ENCODE measurements at regions of chr4 and their contacts with region 1.

Region 1: GRCh38 chr4:77385124-77385969 is 220.3 kb upstream of the CXCL13 start:
- DNase-seq: peak; percentile 18 to 73
- ATAC-seq: peak in 2 of 3 donors; percentile 58 to 70
- H3K4me3 ChIP-seq: no peak overlapping the region
- H3K4me3 Mint-ChIP-seq: no peak overlapping the region
- H3K27ac ChIP-seq: no peak overlapping the region
- H3K27ac Mint-ChIP-seq: no peak overlapping the region
- H3K4me1 ChIP-seq: no peaks in the 10 kb centered on the region
- H3K4me1 Mint-ChIP-seq: no peaks in the 10 kb centered on the region
- H3K27me3 ChIP-seq: no peaks in the 10 kb centered on the region
- H3K27me3 Mint-ChIP-seq: no peaks in the 10 kb centered on the region
- CTCF ChIP-seq: peak; percentile 64

Region 2: GRCh38 chr4:76641351-76641750 is 744.0 kb before region 1 on chr4:
- intact Hi-C with region 1: no loop called
- DNase-seq: no peak
- ATAC-seq: no peak
- H3K4me3 ChIP-seq: no peak overlapping the region
- H3K4me3 Mint-ChIP-seq: no peak overlapping the region
- H3K27ac ChIP-seq: no peak overlapping the region
- H3K27ac Mint-ChIP-seq: no peak overlapping the region
- H3K4me1 ChIP-seq: no peaks in the 10 kb centered on the region
- H3K4me1 Mint-ChIP-seq: no peaks in the 10 kb centered on the region
- H3K27me3 ChIP-seq: no peaks in the 10 kb centered on the region
- H3K27me3 Mint-ChIP-seq: peaks cover 10 to 19% of the 10 kb centered on the region in 2 donors
- CTCF ChIP-seq: no peak

Region 3: GRCh38 chr4:77600521-77601451 is 215.4 kb after region 1 on chr4:
- intact Hi-C with region 1: loop called (anchors 1 kb)
- DNase-seq: peak in 1 of 2 donors; percentile 56
- ATAC-seq: peak in 2 of 3 donors; percentile 53 to 73
- H3K4me3 ChIP-seq: no peak overlapping the region
- H3K4me3 Mint-ChIP-seq: no peak overlapping the region
- H3K27ac ChIP-seq: no peak overlapping the region
- H3K27ac Mint-ChIP-seq: no peak overlapping the region
- H3K4me1 ChIP-seq: no peaks in the 10 kb centered on the region
- H3K4me1 Mint-ChIP-seq: peaks cover 2% of the 10 kb centered on the region in 2 donors
- H3K27me3 ChIP-seq: no peaks in the 10 kb centered on the region
- H3K27me3 Mint-ChIP-seq: peaks cover 9 to 18% of the 10 kb centered on the region in 2 donors
- CTCF ChIP-seq: peak; percentile 75

Region 4: DNA sequence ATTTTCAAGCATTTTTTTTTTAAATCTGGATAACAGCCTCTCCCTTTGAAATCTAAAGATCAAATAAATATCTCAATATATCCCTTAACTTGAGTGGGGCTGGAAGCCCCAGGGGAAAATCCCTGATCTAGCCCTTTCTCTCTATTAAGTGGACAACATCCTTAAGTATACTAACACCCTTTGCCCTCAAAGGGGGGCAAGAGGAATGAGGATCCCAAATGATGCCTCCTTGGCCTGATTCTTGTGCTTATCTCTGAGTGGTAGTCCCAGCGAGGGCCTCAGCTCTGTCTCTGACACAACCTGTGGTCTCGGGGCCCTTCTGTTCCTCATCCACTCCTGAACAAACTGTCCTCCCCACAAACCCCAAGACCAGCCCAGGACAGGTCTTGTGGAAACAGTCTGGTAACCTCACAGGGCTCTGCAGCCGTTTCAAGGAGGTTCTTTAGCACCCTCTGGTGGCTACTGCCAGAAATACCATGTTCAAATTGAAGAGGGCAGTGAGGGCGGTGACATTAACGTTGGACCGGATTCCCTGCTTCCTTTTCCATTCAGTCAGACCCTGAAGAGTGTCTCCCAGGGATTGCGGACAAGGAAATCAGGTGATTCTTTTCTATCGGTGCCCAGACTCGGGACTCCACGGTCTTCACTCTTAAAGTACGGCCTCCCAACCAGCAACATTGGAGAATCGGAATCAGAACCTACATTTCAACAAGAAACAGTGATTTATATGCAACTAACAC is 233.2 kb after region 1 on chr4:
- intact Hi-C with region 1: loop called (anchors 5 kb)
- DNase-seq: peak; percentile 27 to 76
- ATAC-seq: peak; percentile 88 to 97 (median 88)
- H3K4me3 ChIP-seq: no peak overlapping the region
- H3K4me3 Mint-ChIP-seq: no peak overlapping the region
- H3K27ac ChIP-seq: no peak overlapping the region
- H3K27ac Mint-ChIP-seq: no peak overlapping the region
- H3K4me1 ChIP-seq: peaks cover 6% of the 10 kb centered on the region
- H3K4me1 Mint-ChIP-seq: peaks cover 10% of the 10 kb centered on the region in 2 donors
- H3K27me3 ChIP-seq: no peaks in the 10 kb centered on the region
- H3K27me3 Mint-ChIP-seq: peaks cover 23 to 27% of the 10 kb centered on the region in 2 donors
- CTCF ChIP-seq: peak; percentile 94